Naive thymus-derived CD4-positive, alpha-beta T cell (primary cell): ENCODE measurements at regions of chr15 and their contacts with region 1.

Region 1: GRCh38 chr15:62060113-62060895 is at the start of gene VPS13C:
- DNase-seq: peak; percentile 87 to 95 (median 91)
- ATAC-seq: peak; percentile 93
- H3K4me3 ChIP-seq: peak within 1 kb of the TSS; percentile 94
- H3K4me3 Mint-ChIP-seq: peak within 1 kb of the TSS; percentile 90 to 100 (median 96)
- H3K27ac ChIP-seq: peak within 1 kb of the TSS; percentile 81
- H3K27ac Mint-ChIP-seq: peak within 1 kb of the TSS; percentile 89 to 99 (median 98)
- H3K4me1 ChIP-seq: peaks cover 20 to 24% of the 10 kb centered on the region in 2 donors
- H3K4me1 Mint-ChIP-seq: peaks cover 26 to 61% (median 48%) of the 10 kb centered on the region in 7 donors
- H3K27me3 ChIP-seq: no peaks in the 10 kb centered on the region
- H3K27me3 Mint-ChIP-seq: peaks cover 0 to 34% (median 3%) of the 10 kb centered on the region in 5 donors
- total RNA-seq, gene VPS13C: 104 to 159 (median 144) TPM

Region 2: DNA sequence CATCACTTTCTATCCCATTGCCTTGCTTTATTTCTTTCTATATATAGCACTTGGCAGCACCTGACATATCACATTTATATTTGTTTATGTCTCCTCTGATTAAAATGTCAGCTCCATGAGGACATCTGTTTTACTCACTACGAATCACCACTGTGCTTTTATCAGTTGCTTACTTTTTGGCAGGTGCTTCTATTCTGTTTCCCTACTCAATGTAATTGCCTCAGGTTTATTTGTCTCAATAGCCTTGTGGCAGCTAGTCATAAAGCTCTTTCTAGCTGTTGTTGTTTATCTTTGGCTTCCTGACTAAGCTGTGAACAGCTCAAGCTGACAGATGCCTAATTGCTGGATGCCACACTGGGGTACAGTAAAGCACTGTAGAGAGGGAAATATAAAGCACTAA is 85.5 kb before region 1 on chr15:
- CTCF ChIA-PET with region 1: no interaction called
- POLR2A ChIA-PET with region 1: no interaction called
- intact Hi-C with region 1: loop called in 1 of 2 experiments (anchors 10 kb)
- DNase-seq: no peak
- ATAC-seq: no peak
- H3K4me3 ChIP-seq: no peak overlapping the region
- H3K4me3 Mint-ChIP-seq: no peak overlapping the region
- H3K27ac ChIP-seq: no peak overlapping the region
- H3K27ac Mint-ChIP-seq: peak overlapping the region in 4 of 9 donors; percentile 19 to 78 (median 42)
- H3K4me1 ChIP-seq: peaks cover 0 to 6% of the 10 kb centered on the region in 2 donors
- H3K4me1 Mint-ChIP-seq: peaks cover 10 to 18% (median 14%) of the 10 kb centered on the region in 7 donors
- H3K27me3 ChIP-seq: no peaks in the 10 kb centered on the region
- H3K27me3 Mint-ChIP-seq: no peaks in the 10 kb centered on the region

Region 3: DNA sequence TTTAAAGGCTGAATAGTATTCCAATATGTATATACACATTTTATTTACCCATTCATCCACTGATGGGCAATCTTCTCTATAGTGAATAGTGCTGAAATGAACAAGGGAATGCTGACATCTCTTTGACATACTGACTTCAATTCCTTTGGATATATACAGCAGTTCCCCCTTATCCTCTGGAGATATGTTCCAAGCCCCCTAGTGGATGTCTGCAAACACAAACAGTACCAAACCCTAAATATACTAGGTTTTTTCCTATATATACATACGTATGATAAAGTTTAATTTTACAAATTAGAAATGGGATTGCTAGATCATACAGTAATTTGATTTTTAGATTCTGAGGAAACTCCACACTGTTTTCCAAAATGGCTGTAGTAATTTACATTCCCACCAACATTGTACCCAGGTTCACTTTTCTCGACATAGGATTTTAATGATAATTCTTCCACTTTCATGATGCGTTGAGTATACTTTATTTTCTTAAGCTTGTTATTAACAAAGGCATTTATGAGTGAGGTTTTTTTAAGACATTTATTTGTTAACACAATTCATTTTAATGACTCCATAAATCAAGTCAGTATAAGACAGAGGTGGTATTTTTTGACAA is 38.2 kb before region 1 on chr15:
- CTCF ChIA-PET with region 1: interaction called, 5 read pairs
- POLR2A ChIA-PET with region 1: no interaction called
- intact Hi-C with region 1: loop called in 1 of 2 experiments (anchors 5 kb)
- DNase-seq: no peak
- ATAC-seq: no peak
- H3K4me3 ChIP-seq: no peak overlapping the region
- H3K4me3 Mint-ChIP-seq: no peak overlapping the region
- H3K27ac ChIP-seq: no peak overlapping the region
- H3K27ac Mint-ChIP-seq: no peak overlapping the region
- H3K4me1 ChIP-seq: no peaks in the 10 kb centered on the region
- H3K4me1 Mint-ChIP-seq: peaks cover 0 to 7% (median 0%) of the 10 kb centered on the region in 7 donors
- H3K27me3 ChIP-seq: no peaks in the 10 kb centered on the region
- H3K27me3 Mint-ChIP-seq: no peaks in the 10 kb centered on the region

Region 4: GRCh38 chr15:62046078-62046743 is 14.1 kb before region 1 on chr15:
- CTCF ChIA-PET with region 1: interaction called, 4 read pairs
- POLR2A ChIA-PET with region 1: interaction called, 3 read pairs
- intact Hi-C with region 1: loop called (anchors 1 to 2 kb)
- DNase-seq: no peak
- ATAC-seq: peak; percentile 63
- H3K4me3 ChIP-seq: no peak overlapping the region
- H3K4me3 Mint-ChIP-seq: peak overlapping the region in 9 of 10 donors; percentile 5 to 83 (median 57)
- H3K27ac ChIP-seq: no peak overlapping the region
- H3K27ac Mint-ChIP-seq: peak overlapping the region in 6 of 9 donors; percentile 2 to 80 (median 41)
- H3K4me1 ChIP-seq: peaks cover 0 to 9% of the 10 kb centered on the region in 2 donors
- H3K4me1 Mint-ChIP-seq: peaks cover 16 to 43% (median 36%) of the 10 kb centered on the region in 7 donors
- H3K27me3 ChIP-seq: no peaks in the 10 kb centered on the region
- H3K27me3 Mint-ChIP-seq: no peaks in the 10 kb centered on the region

Region 5: DNA sequence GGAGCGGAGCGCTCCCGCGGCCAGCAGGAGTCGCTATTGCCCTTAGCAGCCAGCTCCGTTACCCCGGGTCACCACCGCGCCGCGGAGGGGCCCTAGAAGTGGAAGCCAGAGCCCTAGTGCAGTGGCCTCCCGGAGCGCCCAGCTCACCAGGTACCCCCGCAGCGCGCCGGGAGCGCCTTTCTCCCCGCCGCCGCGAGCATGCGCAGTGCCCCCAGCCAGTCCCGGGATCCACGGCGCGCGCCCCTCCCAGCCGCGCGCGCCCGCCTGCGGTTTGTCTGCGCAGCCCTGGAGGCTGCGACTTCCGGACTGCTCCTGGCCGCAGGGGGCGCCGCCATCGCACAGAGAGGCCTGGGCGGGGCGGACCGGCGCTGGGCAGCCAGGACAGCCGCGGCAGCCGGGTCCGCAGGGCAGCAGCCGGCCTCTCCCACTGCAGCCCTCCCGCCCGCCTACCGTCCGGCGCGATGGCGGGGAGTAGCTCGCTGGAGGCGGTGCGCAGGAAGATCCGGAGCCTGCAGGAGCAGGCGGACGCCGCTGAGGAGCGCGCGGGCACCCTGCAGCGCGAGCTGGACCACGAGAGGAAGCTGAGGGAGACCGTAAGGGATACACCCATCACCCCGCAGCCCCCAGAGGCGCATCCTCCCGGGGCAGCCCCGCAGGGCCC is 987.9 kb after region 1 on chr15:
- CTCF ChIA-PET with region 1: no interaction called
- POLR2A ChIA-PET with region 1: no interaction called
- intact Hi-C with region 1: loop called in 1 of 2 experiments (anchors 5 kb)
- DNase-seq: peak; percentile 72 to 90 (median 85)
- ATAC-seq: peak; percentile 92
- H3K4me3 ChIP-seq: peak overlapping the region; percentile 76
- H3K4me3 Mint-ChIP-seq: peak overlapping the region; percentile 84 to 97 (median 94)
- H3K27ac ChIP-seq: peak overlapping the region; percentile 59
- H3K27ac Mint-ChIP-seq: peak overlapping the region; percentile 25 to 85 (median 68)
- H3K4me1 ChIP-seq: peaks cover 7 to 16% of the 10 kb centered on the region in 2 donors
- H3K4me1 Mint-ChIP-seq: peaks cover 13 to 42% (median 26%) of the 10 kb centered on the region in 7 donors
- H3K27me3 ChIP-seq: peaks cover 17 to 27% of the 10 kb centered on the region in 2 donors
- H3K27me3 Mint-ChIP-seq: peaks cover 30 to 60% (median 36%) of the 10 kb centered on the region in 5 donors